Posterior vena cava (tissue), 2 donors: ENCODE measurements at regions of chr11 and their contacts with region 1.

Region 1: GRCh38 chr11:17668166-17668565 is 51.2 kb upstream of the MYOD1 start:
- DNase-seq: no peak

Region 2: DNA sequence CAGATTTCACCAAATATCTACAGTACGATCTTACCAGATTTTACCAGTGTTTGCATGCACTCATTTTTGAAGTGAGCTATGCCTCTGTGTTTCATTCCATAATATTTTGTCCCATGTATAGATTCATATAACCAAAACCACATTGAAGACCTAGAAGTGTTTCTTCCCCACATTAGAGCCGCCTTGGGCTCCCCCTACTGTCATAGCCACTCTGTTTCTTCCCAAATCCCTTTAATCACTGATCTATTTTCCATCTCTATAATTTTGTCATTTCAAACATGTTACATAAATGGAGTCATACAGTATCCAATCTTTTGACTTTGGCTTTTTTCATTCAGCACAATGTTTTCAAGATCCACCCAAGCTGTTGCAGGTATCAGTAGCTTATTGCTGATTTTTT is 476.9 kb after region 1 on chr11:
- intact Hi-C with region 1: no loop called
- DNase-seq: no peak

Region 3: GRCh38 chr11:18229501-18229900 is 561.3 kb after region 1 on chr11:
- intact Hi-C with region 1: loop called in 1 of 2 experiments (anchors 5 kb)
- DNase-seq: no peak